HCT116 (cell line): ENCODE measurements at regions of chr1 and their contacts with region 1.

Region 1: GRCh38 chr1:183543619-183544204 is 46.5 kb downstream of the NCF2 start:
- DNase-seq: peak; percentile 23
- ATAC-seq: peak; percentile 98
- H3K4me3 ChIP-seq: no peak overlapping the region
- H3K27ac ChIP-seq: no peak overlapping the region
- H3K4me1 ChIP-seq: peaks cover 0 to 3% of the 10 kb centered on the region in 2 experiments; a peak in 1 of 4 replicates
- H3K27me3 ChIP-seq: no peaks in the 10 kb centered on the region
- CTCF ChIP-seq: peak; percentile 47 to 74 (median 64); a peak in 5 of 6 replicates
- POLR2A ChIP-seq: no peak
- RAD21 ChIP-seq: peak; percentile 62

Region 2: GRCh38 chr1:182739545-182739944 is 804.2 kb before region 1 on chr1:
- CTCF ChIA-PET with region 1: no interaction called
- POLR2A ChIA-PET with region 1: no interaction called
- RAD21 ChIA-PET with region 1: no interaction called
- intact Hi-C with region 1: no loop called
- DNase-seq: no peak
- ATAC-seq: no peak
- H3K4me3 ChIP-seq: no peak overlapping the region
- H3K27ac ChIP-seq: no peak overlapping the region
- H3K4me1 ChIP-seq: no peaks in the 10 kb centered on the region
- H3K27me3 ChIP-seq: no peaks in the 10 kb centered on the region
- CTCF ChIP-seq: no peak
- POLR2A ChIP-seq: no peak
- RAD21 ChIP-seq: no peak

Region 3: DNA sequence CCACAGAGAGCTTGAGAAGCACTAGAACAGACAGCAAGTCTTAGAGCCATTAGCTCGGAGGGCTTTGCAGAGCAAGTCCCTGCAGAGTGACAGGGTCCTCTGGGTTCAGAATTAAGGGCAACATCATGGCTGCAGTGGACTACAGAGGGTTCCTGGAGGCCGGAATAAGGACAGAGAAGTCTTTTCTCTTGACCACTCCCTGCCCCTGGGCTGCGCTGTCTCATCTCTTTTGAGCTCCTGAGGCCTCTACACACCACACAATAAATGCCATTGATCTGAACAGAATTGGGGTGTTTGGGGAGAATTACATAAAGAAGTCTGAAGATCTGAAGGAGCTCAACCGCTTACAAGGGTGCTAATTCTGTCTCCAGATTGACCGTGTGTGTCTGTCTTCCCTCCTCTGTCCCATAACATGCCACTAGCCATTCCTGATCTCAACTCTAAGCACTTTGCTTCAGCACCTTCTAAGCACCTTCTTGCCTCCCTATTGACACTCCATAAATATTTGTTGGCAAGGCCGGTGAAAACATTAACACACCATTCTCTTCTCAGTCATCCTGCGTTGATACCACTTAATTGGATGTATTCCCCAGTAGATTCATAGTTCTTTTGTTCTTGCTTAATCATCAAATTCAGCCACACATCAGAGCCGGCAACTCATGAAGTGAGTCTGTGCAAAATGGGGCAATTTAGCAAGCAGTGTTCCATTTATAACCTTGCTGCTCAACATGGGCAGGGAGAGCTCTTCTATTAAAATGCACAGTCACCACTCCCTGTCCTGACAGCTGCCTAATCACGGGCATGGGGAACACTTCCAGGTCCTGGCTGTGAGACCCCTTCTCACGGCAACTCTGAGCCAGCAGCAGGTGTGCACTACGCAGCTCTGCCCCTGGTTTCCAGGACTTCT is 175.3 kb before region 1 on chr1:
- CTCF ChIA-PET with region 1: no interaction called
- POLR2A ChIA-PET with region 1: no interaction called
- RAD21 ChIA-PET with region 1: no interaction called
- intact Hi-C with region 1: loop called (anchors 10 kb)
- DNase-seq: no peak
- ATAC-seq: no peak; the same call in 1 of the 2 replicates
- H3K4me3 ChIP-seq: no peak overlapping the region
- H3K27ac ChIP-seq: no peak overlapping the region
- H3K4me1 ChIP-seq: peaks cover 0 to 3% of the 10 kb centered on the region in 2 experiments; a peak in 1 of 4 replicates
- H3K27me3 ChIP-seq: no peaks in the 10 kb centered on the region
- CTCF ChIP-seq: no peak
- POLR2A ChIP-seq: no peak
- RAD21 ChIP-seq: peak; percentile 33; the same call in 1 of the 2 replicates